Ascending aorta (tissue), 2 donors: ENCODE measurements at regions of chr14 and their contacts with region 1.

Region 1: DNA sequence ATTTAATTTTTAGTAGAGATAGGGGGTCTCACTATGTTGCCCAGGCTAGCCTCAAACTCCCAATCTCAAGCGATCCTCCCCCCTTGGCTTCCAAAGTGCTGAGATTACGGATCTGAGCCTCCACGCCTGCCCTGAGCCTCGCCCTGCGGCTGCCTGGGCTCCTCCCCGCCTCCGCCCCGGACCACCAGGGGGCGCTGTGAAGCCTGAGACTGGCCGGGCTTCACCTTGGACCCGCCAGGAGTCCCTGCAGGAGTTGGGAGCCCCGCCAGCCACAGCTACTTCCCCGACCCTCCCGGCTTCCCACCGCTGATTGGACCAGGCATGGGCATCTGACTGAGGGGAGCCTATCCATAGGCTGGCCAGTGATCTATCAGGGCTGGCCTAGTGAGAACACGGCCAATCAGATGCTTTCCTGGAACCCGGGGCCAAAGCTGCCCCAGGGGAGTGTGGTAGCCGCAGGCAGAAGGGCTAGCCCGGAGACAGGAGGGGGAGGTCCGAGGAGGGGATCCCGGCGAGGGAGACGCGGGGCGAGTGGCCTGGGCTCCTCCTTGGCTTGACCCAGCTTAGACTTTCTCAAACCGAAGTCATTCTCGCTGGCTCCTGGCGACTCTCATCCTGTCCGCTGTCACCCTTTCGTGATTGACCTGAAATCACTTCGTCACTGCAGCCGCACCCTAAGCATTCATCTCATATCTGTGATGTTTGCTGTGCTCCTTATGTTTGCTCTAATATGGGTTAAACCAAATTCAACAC is 15.1 kb upstream of the ANKRD9 start:
- DNase-seq: peak; percentile 94 to 99
- H3K4me3 ChIP-seq: peak overlapping the region; percentile 63 to 81
- H3K27ac ChIP-seq: peak overlapping the region; percentile 71 to 83
- H3K4me1 ChIP-seq: peaks cover 0 to 5% of the 10 kb centered on the region in 2 donors
- H3K27me3 ChIP-seq: no peaks in the 10 kb centered on the region
- CTCF ChIP-seq: peak; percentile 98 to 99 (median 98)

Region 2: GRCh38 chr14:102591889-102592763 is 67.5 kb after region 1 on chr14 and contains the start of gene RCOR1:
- intact Hi-C with region 1: loop called (anchors 1 kb)
- DNase-seq: peak; percentile 93 to 99
- H3K4me3 ChIP-seq: peak within 1 kb of the TSS; percentile 68 to 83
- H3K27ac ChIP-seq: peak within 1 kb of the TSS; percentile 94 to 98
- H3K4me1 ChIP-seq: peaks cover 8 to 12% of the 10 kb centered on the region in 2 donors
- H3K27me3 ChIP-seq: no peaks in the 10 kb centered on the region
- CTCF ChIP-seq: no peak
- total RNA-seq, gene RCOR1: 4.7 TPM